ENCODE measurements at regions of chr14 and their contacts with region 1.

Region 1: GRCh38 chr14:23095196-23096108 is at the start of gene C14orf119:
- DNase-seq: peak; percentile 99 to 100
- H3K4me3 ChIP-seq: peak within 1 kb of the TSS; percentile 78 to 86
- H3K27ac ChIP-seq: peak within 1 kb of the TSS; percentile 97 to 98
- H3K4me1 ChIP-seq: peaks cover 0 to 22% of the 10 kb centered on the region in 2 donors
- H3K27me3 ChIP-seq: no peaks in the 10 kb centered on the region
- CTCF ChIP-seq: no peak
- total RNA-seq, gene C14orf119: 2.2 TPM

Region 2: GRCh38 chr14:23071244-23071974 is 24.0 kb before region 1 on chr14:
- intact Hi-C with region 1: loop called (anchors 2 kb)
- DNase-seq: peak; percentile 65 to 92
- H3K4me3 ChIP-seq: peak overlapping the region; percentile 73 to 76
- H3K27ac ChIP-seq: peak overlapping the region; percentile 79 to 82
- H3K4me1 ChIP-seq: peaks cover 7 to 17% of the 10 kb centered on the region in 2 donors
- H3K27me3 ChIP-seq: no peaks in the 10 kb centered on the region
- CTCF ChIP-seq: peak in 2 of 3 experiments; percentile 1 to 13

Region 3: GRCh38 chr14:23286020-23286905 is 190.8 kb after region 1 on chr14 and contains the start of gene HOMEZ:
- intact Hi-C with region 1: loop called (anchors 5 kb)
- DNase-seq: peak; percentile 99 to 100
- H3K4me3 ChIP-seq: peak within 1 kb of the TSS; percentile 78 to 100
- H3K27ac ChIP-seq: peak within 1 kb of the TSS; percentile 95 to 99
- H3K4me1 ChIP-seq: peaks cover 0 to 11% of the 10 kb centered on the region in 2 donors
- H3K27me3 ChIP-seq: no peaks in the 10 kb centered on the region
- CTCF ChIP-seq: peak in 2 of 3 experiments; percentile 10
- total RNA-seq, gene HOMEZ: 7.3 TPM

Region 4: DNA sequence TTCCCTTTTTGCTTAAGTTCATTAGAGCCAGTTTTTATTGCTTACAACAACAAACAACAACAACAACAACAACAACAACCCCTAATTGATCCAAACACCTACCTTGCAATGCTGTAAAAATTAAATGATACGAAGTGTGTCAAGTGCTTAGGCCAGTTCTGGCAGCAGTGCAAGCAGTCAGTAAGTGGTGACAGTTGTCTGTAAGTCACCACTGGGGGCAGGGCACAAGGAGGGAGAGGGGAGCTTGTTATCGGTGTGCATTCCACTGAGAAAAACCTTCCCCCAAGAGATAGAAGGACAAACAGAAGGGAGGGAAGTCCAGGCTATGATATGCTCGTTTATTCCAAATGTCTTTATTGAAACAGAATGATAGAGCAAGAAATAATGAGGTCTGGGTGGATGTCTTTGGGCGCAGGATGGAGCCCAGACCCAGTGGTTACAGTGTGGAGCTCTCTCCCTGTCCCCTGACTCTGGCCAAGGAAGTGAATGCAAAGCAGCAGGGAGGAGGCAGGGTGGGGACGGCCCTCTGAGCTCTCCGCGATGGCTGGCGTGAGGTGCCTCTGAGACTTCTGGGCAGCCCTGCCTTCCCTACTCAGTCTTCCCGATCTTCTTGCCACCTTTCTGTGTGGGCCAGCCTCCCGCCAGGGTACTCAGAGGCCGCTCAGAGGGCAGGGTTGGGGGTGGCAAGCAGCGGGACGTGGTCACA is 250.7 kb after region 1 on chr14:
- intact Hi-C with region 1: no loop called
- DNase-seq: peak in 1 of 2 donors; percentile 38
- H3K4me3 ChIP-seq: no peak overlapping the region
- H3K27ac ChIP-seq: no peak overlapping the region
- H3K4me1 ChIP-seq: no peaks in the 10 kb centered on the region
- H3K27me3 ChIP-seq: no peaks in the 10 kb centered on the region
- CTCF ChIP-seq: no peak

Measured in ascending aorta (tissue), 2 donors.